Activated naive CD4-positive, alpha-beta T cell treated with anti-CD3 and anti-CD28 coated beads for 36 hours (primary cell): ENCODE measurements at regions of chr11 and their contacts with region 1.

Region 1: DNA sequence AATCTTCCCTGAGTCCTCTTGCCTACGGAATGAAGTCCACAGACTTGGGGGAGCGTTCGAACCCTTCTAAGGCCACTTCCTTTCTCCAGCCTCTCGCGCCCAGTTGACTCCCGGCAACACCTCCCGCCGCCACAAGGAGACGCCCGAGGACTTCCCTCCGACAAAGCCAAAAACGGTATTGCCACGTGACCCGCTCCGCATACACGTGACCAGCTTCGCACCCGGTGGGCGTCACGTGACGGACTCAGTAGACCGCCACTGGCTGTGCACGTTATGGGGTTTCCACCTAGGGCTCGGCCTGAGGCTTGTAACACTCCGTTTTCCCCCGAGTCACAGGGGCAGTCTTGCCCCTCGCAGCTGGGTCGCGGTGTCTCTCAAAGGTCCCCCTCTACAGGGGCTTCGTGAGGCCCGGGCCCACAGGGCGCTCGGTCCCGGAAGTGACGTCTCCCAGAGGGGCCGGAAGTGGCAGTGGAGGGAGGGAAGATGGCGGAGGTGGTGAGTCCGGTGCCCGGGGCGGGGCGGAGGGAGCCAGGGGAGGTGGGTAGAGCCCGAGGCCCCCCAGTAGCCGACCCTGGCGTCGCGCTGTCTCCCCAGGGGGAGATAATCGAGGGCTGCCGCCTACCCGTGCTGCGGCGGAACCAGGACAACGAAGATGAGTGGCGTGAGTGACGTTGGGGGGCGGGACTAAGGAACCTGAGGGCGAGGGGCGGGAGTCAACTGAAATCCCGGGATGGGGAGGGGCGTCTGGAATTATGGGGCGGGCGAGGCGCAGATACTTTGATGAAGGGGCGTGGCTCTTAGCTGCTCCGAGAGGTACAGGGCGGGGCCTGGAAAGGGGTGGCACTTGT is at the start of gene KAT5:
- DNase-seq: peak; percentile 100
- H3K4me3 Mint-ChIP-seq: peak within 1 kb of the TSS; percentile 95
- H3K27ac Mint-ChIP-seq: peak within 1 kb of the TSS; percentile 97
- H3K4me1 Mint-ChIP-seq: peaks cover 33% of the 10 kb centered on the region
- H3K27me3 Mint-ChIP-seq: no peaks in the 10 kb centered on the region
- total RNA-seq, gene KAT5: 60.1 to 67.1 TPM

Region 2: DNA sequence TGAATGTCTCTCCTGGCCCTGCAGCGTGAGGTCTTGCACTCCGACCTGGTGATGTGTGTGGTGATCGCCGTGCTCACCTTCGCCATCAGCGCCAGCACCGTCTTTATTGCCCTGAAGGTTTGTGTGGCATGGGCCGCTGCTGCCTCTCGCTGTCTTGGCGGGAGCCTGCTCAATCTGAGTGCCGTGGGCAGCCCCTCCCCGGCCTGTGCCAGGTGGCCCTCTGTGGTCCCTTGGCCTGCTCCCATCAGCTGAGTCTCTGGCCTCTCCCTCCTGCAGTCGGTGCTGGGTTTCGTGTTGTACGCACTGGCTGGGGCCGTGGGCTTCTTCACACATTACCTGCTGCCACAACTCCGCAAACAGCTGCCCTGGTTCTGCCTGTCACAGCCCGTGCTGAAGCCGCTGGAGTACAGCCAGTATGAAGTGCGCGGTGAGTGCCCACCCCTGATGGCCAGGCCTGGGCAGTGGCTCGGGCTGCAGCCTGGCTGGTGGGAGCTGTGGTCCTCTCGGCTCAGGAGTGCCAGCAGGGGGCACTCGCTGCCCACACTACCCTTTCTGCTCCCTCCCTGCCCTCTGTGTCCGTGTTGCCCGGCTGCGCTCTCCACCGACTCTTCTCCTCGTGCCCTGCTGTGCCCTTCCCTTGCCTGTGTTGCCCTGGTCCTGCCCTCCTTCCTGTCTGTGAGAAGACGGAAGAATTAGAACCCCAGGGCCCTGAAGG is 86.2 kb before region 1 on chr11:
- CTCF ChIA-PET with region 1: interaction called, 3 read pairs
- intact Hi-C with region 1: loop called (anchors 2 kb)
- DNase-seq: peak; percentile 63
- H3K4me3 Mint-ChIP-seq: no peak overlapping the region
- H3K27ac Mint-ChIP-seq: no peak overlapping the region
- H3K4me1 Mint-ChIP-seq: peaks cover 9% of the 10 kb centered on the region
- H3K27me3 Mint-ChIP-seq: no peaks in the 10 kb centered on the region

Region 3: DNA sequence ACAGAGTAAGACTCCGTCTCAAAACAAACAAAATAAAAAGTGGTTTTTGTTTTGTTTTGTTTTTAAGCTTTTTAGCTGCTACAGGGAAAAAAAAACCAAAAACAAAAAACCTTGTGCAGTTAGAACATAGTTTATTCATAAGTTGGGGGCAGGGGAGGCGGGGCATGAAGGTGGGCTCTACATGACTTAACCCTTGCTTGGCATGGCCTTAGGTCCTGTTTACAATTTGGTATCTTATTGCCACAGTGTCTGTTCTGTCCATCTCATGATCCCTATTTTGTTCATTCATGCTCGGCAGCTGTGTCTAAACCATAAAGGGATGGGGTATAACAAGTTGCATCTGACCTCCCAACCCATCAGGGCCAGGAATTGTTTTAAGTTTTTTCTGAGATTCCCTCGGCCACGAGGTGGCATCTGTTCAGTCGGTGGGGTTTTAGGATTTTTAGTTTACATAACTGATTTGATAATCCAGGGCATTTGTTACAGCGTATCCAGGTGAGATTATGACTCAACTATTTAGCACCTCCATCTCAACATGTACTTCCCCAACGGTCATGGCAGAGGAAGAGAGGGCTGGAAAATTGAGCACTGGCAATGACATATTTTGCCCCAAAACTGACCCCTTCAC is 61.9 kb after region 1 on chr11:
- CTCF ChIA-PET with region 1: interaction called, 21 read pairs
- intact Hi-C with region 1: loop called (anchors 1 kb)
- DNase-seq: no peak
- H3K4me3 Mint-ChIP-seq: no peak overlapping the region
- H3K27ac Mint-ChIP-seq: no peak overlapping the region
- H3K4me1 Mint-ChIP-seq: peaks cover 12% of the 10 kb centered on the region
- H3K27me3 Mint-ChIP-seq: no peaks in the 10 kb centered on the region

Region 4: GRCh38 chr11:66081505-66081904 is 369.5 kb after region 1 on chr11:
- CTCF ChIA-PET with region 1: no interaction called
- intact Hi-C with region 1: no loop called
- DNase-seq: peak; percentile 91
- H3K4me3 Mint-ChIP-seq: peak overlapping the region; percentile 78
- H3K27ac Mint-ChIP-seq: peak overlapping the region; percentile 98
- H3K4me1 Mint-ChIP-seq: peaks cover 92% of the 10 kb centered on the region
- H3K27me3 Mint-ChIP-seq: no peaks in the 10 kb centered on the region